Motor neuron (in vitro differentiated cells): ENCODE measurements at regions of chr6 and their contacts with region 1.

Region 1: DNA sequence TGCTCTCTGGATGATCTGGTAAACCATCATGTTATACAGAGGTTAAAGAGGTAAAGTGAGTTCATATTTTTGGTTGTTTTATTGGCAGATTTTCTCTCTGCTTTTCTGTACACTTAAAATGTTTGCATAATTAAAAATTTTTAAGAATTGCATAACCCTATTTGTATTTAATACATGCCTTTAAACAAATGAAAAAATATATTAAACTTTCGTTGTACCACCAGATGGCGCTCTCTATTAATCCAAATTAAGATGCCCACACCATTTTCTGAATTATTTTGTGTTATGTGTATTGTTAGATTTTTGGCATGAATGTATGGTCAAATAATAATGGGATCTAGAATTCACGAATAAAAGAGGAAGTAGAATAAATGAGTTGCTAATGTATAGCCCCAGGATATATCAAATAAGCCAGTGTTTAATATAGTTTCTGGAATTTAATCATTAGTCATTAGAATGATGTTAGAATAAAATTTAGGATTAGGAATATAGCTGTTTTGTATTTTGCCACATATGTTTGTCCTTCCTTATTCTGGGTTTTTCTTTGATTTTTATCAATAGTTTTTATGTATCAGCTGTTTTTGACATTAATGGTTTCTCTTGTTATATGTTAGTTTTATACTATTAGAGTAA is 38.9 kb downstream of the SMAP1 start:
- ATAC-seq: no peak
- H3K4me3 ChIP-seq: no peak overlapping the region
- H3K27ac ChIP-seq: no peak overlapping the region
- H3K4me1 ChIP-seq: no peaks in the 10 kb centered on the region

Region 2: DNA sequence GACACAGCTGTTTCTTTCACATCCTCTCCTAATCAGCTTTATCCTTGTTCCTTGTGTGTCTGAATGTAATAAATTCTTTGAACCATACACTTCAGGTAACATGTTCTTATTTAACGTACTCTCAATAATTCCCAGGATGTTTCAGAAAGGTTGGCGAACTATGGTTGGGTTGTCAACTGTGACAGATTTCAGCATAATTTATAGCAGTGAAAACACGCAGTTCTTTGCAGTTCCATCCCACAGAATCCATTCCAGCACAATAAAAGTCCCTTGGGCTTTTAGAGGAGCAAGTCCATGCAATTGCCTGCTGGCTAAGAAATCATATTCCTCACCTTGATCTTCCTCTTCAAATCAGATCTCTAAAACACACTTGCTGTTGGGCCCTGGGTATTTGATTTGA is 523.1 kb before region 1 on chr6:
- in situ Hi-C with region 1: no loop called
- ATAC-seq: peak in 4 of 8 experiments; percentile 25 to 74 (median 72)
- H3K4me3 ChIP-seq: no peak overlapping the region
- H3K27ac ChIP-seq: no peak overlapping the region
- H3K4me1 ChIP-seq: peaks cover 4 to 18% of the 10 kb centered on the region in 2 donors

Region 3: DNA sequence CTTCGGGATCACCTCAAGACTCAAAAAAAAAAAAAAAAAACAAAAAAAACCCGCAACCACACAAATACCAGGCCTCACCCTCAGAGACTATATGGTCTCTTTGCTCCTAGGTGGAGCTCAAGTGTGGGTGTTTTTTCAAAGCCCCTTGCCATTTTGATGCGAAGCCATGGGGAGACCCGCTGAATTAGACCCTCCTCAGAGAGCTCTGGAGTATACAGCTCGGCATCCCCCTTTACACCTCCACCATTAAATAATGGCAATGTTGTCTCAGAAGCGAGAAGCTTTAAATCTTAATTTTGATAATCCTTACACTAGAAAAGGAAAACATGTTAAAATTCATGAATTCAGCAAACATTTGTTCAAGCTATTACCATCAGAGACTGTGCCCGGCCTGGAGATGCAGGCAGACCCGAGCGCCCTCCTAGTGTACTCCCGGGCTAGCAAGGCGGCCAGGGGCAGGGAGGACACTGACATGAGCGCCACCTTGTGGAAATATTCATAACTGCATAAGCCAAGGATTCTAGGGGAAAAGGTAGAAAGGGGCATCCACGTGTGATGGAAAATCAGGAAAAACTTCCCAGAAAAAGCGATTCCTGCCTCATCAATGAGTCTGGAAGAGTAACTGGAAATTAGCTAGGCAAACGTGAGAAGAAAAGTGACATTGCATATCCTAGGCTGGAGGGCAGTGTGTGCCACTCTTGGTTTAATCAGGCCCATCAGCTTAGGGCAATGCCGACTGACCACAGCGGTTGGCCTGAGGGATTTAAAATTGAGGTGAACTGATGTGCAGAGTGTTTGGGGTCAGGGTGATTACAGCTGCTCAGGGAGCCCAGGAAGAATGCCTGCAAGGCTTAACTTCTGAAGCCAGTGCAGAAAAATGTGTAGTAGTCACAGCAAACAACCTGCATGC is 177.7 kb after region 1 on chr6:
- in situ Hi-C with region 1: loop called in 3 of 9 experiments (anchors 10 to 25 kb)
- ATAC-seq: peak; percentile 69 to 94 (median 80)
- H3K4me3 ChIP-seq: no peak overlapping the region
- H3K27ac ChIP-seq: no peak overlapping the region
- H3K4me1 ChIP-seq: no peaks in the 10 kb centered on the region

Region 4: DNA sequence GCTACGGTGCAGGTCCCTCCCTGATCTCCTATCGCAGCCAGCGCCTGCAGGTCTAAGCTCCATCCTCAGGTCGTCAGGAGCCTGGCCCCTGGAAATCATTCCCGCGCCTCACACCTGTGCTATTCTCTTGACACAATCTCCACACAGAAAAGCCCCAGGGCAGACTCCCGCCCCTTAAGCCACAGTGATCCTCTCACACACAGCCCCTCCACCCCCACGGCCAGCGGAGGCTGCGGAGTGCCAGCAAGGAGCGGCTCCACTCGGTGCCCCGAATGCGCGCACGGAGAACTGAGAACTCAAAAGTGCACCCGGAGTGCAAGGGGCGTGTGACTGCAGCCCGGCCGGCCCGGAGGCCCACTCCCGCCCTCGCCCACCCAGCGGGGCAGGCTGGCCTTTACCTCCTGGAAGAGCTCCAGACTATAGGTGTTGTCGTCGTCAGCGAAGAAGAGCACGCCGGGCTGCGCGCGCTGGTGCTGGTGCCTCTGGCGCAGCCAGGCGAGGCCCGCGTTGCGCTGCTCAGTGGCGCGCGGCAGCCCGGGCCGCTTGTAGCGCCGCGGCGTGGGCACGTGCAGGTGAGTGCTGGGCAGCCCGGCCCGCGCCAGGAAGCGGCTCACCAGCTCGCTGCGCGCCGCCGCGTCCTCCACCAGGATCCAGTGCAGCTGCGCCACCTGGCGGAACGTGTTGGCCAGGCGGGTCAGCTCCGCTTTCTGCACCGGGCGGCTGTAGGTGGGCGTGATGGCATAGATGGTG is 249.0 kb after region 1 on chr6:
- in situ Hi-C with region 1: loop called in 2 of 9 experiments (anchors 25 kb)
- ATAC-seq: peak; percentile 80 to 91 (median 88)
- H3K4me3 ChIP-seq: peak overlapping the region; percentile 44 to 59 (median 55)
- H3K27ac ChIP-seq: no peak overlapping the region
- H3K4me1 ChIP-seq: peaks cover 0 to 11% of the 10 kb centered on the region in 2 donors